ENCODE measurements at regions of chr9 and their contacts with region 1.

Region 1: GRCh38 chr9:37913480-37914153 is 9.7 kb upstream of the SLC25A51 start:
- DNase-seq: peak; percentile 69 to 98 (median 92)

Region 2: DNA sequence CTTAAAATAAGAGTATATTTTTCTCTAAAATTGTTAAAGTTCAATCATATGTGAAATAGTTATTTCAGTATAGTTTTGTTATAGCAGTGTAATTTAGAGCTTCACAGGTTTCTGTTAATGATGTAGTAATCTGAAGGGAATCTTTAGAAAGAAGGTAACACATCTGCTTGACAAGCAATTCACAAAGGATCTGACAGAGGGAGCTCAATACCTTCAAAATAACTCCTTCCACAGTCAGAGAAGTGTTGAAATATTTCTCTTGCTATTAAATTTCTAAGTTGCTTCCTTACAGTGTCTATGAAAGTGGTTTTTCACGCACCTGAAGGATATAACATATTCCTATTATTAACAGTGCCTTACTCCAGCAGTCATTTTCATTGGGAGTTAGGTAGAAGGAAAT is 54.6 kb before region 1 on chr9:
- intact Hi-C with region 1: no loop called
- DNase-seq: no peak

Region 3: DNA sequence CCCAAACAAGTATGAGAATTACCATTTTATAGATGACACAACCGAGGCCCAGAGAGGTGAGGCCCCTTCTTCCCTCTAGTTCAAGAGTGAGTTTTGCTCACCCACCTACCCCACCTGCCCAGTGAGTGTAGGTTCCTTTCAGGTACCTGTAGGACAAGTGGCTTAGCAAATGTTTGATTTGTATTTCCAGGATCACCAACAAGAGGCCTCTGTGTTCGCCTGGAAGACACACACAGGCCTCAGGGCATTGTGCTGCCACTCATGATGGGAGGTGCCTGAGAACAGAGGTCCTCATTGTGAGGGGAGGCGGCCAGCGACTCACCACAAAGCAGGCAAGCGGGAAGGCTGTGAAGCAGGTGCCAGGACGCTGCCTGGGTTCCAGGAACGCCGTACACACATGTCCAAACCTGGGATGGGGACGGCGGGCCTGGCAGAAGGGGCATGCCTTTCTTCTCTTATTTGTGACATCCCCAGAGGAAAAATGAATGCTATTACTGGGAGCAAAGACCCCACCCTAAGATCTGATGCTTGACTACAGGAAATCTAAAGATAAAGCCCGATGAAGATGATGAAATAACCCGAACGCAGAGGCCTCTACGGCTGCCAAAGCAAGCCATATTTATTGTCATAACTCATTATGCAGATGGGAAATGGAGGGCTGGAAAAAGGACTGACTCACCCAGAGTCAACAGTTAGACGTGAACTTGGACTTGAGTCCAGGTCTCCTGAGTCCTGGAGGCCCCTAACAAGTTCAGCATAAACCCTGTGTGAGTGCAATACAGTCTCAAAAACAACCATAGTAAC is 50.5 kb after region 1 on chr9:
- intact Hi-C with region 1: loop called (anchors 10 kb)
- DNase-seq: peak; percentile 42 to 97 (median 81)

Region 4: GRCh38 chr9:38017149-38017884 is 103.7 kb after region 1 on chr9:
- intact Hi-C with region 1: loop called (anchors 5 kb)
- DNase-seq: peak; percentile 73 to 98 (median 83)

Region 5: GRCh38 chr9:38160613-38161215 is 247.1 kb after region 1 on chr9:
- intact Hi-C with region 1: loop called (anchors 1 kb)
- DNase-seq: peak in 3 of 10 donors; percentile 14 to 69 (median 60)

Region 6: DNA sequence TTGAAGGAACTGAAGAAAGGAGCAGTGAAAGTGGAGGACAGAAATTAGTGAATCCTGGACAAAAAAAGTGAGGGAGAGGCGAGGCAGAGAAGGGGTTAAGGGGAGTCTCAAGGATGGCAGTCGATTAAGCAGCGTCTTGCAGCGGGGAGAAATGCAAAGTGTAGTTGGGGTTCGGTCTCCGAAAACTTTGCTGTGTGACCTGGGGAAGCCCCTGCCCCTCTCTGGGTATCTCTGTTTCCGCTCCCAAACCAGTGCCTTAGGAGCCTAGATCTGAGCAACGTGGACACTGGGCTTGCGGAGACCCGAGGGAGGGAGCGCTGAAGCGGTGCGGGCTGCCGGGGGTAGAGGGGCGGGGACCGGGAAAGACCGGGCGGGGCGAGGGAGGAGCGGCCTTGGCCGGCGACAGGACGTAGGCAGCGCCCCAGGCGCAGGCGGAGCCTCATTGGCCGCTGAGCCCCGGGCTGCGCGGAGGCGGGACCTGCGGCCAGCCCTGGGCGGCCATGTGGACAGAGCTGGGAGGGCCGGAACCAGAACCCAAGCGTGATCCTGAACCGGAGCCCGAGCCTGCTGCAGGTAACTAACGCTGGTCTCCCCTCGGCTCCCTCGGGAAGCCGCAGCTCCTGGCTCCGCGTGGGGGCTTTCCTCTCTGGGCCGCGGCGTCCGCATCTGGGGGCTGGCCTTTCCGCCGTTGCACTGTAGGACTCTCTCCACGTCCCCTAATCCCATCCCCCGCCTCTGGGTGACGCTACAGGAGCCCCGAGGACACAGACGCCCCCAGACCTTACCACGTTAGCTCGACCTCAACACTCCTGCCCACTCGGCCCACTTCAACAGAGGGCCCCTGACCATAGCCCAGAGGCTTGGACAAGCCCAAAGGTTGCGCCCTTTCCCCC is 478.9 kb after region 1 on chr9 and contains the start of gene ALDH1B1:
- intact Hi-C with region 1: loop called (anchors 10 kb)
- DNase-seq: peak; percentile 59 to 96 (median 76)